CD14-positive monocyte (primary cell): ENCODE measurements at regions of chr15 and their contacts with region 1.

Region 1: DNA sequence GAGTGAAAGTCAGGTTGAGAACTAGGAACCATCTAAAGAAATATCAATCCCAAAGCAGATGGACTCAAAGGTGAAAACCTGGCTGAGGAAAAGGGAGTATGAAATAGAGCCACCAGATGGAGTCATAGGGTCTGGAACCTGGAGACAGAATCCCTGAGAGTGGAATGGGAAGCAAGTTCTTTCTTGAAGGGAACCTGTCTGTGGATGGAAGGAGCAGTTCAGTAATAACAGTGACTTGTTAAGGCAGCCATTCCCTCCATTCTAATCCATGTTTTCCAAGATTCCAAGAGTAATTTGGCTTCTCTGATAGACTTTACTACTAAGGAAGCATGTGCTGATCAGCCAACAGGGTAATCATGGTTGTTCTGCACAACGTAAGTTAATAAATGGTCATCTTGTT is 22.5 kb upstream of the AQP9 start:
- DNase-seq: peak in 2 of 3 donors; percentile 53 to 58
- H3K4me3 ChIP-seq: no peak overlapping the region
- H3K4me3 Mint-ChIP-seq: no peak overlapping the region
- H3K27ac ChIP-seq: no peak overlapping the region
- H3K27ac Mint-ChIP-seq: peak overlapping the region in 3 of 7 donors; percentile 40 to 75 (median 52)
- H3K4me1 ChIP-seq: no peaks in the 10 kb centered on the region
- H3K4me1 Mint-ChIP-seq: no peaks in the 10 kb centered on the region
- H3K27me3 ChIP-seq: no peaks in the 10 kb centered on the region
- H3K27me3 Mint-ChIP-seq: peaks cover 0 to 3% (median 3%) of the 10 kb centered on the region in 3 donors
- CTCF ChIP-seq: peak; percentile 44

Region 2: GRCh38 chr15:58136731-58137130 is 21.0 kb after region 1 on chr15:
- intact Hi-C with region 1: loop called in 1 of 2 experiments (anchors 2 kb)
- DNase-seq: no peak
- H3K4me3 ChIP-seq: no peak overlapping the region
- H3K4me3 Mint-ChIP-seq: no peak overlapping the region
- H3K27ac ChIP-seq: peak overlapping the region in 1 of 2 donors; percentile 94
- H3K27ac Mint-ChIP-seq: peak overlapping the region in 1 of 7 donors; percentile 99
- H3K4me1 ChIP-seq: peaks cover 47% of the 10 kb centered on the region in 2 donors
- H3K4me1 Mint-ChIP-seq: peaks cover 35% of the 10 kb centered on the region
- H3K27me3 ChIP-seq: peaks cover 0 to 2% of the 10 kb centered on the region in 2 donors
- H3K27me3 Mint-ChIP-seq: peaks cover 3 to 7% (median 5%) of the 10 kb centered on the region in 3 donors
- CTCF ChIP-seq: no peak

Region 3: DNA sequence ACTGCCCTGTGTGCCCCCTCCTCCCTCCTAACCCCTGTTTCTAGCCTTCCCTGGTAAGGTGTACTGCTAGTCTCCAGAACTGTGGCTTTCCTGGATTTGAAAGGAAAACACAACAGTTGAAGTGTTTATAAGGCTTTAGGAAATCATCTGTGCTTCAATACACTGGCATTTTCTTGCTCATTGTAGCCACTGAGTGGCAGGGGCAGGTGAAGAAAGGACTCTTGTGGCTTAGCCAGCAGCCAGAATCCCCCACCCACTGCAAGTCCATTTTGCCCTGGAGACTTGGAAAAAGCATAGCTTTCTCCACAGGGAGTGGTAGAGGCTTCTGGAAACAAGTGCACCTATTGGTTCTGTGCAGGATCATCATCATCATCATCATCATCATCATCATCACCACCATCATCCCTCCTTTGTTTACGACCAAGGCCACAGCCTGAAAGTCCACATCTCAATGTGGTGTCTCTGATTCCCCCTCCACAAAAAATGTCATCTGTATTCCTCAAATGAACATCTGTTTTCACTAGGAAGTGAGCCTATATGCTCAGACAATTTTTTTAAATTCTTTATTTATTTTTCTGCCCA is 55.9 kb after region 1 on chr15:
- intact Hi-C with region 1: no loop called
- DNase-seq: no peak
- H3K4me3 ChIP-seq: no peak overlapping the region
- H3K4me3 Mint-ChIP-seq: peak overlapping the region in 1 of 2 donors; percentile 7
- H3K27ac ChIP-seq: no peak overlapping the region
- H3K27ac Mint-ChIP-seq: no peak overlapping the region
- H3K4me1 ChIP-seq: peaks cover 6 to 8% of the 10 kb centered on the region in 2 donors
- H3K4me1 Mint-ChIP-seq: peaks cover 8% of the 10 kb centered on the region
- H3K27me3 ChIP-seq: peaks cover 0 to 2% of the 10 kb centered on the region in 2 donors
- H3K27me3 Mint-ChIP-seq: peaks cover 4 to 20% (median 8%) of the 10 kb centered on the region in 3 donors
- CTCF ChIP-seq: no peak

Region 4: DNA sequence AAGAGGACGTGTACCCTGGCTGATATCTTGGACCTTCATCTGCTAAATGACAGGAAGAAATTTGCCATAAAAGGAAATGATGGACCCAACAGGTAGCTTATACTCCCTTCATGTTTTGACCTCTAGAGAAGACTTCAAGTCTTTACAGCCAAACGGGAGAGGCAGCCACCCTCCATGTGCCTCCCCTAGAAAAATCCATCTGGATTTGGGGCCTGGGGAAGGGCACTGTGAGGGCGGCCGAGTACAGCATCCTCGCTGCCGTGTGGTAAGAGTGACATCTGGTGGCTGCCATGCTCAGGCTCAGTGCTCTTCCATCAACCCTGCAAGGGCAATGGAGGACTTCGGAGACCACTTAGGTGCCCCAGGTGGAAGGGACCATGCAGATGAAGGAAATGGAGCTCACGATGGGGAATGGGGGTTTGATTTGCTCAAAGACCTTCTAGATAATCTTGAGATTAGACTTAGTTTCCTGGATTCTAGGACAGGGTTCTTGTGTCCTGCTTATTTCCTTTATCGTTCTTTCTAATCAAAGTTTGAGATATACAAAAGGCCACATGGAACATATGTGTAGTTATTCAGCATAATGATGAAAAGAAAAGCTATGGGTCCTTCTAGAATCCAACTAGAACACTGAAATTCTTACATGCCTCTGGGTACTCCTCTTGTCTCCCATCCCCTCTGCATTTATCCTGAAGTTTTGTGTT is 66.9 kb after region 1 on chr15:
- intact Hi-C with region 1: loop called (anchors 2 to 5 kb)
- DNase-seq: peak; percentile 32 to 57 (median 37)
- H3K4me3 ChIP-seq: no peak overlapping the region
- H3K4me3 Mint-ChIP-seq: peak overlapping the region in 1 of 2 donors; percentile 15
- H3K27ac ChIP-seq: no peak overlapping the region
- H3K27ac Mint-ChIP-seq: no peak overlapping the region
- H3K4me1 ChIP-seq: peaks cover 0 to 2% of the 10 kb centered on the region in 2 donors
- H3K4me1 Mint-ChIP-seq: peaks cover 5% of the 10 kb centered on the region
- H3K27me3 ChIP-seq: peaks cover 0 to 3% of the 10 kb centered on the region in 2 donors
- H3K27me3 Mint-ChIP-seq: peaks cover 4 to 11% (median 10%) of the 10 kb centered on the region in 3 donors
- CTCF ChIP-seq: peak; percentile 93

Region 5: DNA sequence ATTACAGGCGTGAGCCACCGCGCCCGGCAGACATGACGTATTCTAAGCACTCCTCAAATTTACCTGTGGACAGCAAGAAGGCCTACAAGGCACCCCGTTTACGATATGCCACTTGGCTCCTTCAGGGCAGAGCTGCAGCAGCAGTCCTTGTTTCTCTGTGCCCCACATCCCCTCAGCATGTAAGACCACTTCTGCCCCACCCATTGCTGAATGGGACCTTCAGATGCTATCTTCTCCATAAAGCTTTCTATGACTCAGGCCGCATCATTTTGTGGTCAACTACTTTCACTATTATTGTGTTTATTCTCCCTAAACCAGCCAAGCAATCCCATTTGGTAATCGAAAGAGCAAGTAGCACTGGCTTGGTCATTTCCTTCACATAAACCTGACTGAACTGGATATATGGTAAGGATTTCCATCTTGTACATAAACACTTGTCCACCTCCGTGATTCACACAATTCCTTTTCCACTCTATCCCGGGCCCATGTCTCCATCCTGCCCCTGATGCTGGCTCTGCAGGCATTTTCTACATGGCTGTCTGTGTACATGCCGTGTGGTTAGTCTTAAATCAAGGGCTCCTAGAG is 341.8 kb after region 1 on chr15:
- intact Hi-C with region 1: no loop called
- DNase-seq: peak in 2 of 3 donors; percentile 14 to 67
- H3K4me3 ChIP-seq: no peak overlapping the region
- H3K4me3 Mint-ChIP-seq: no peak overlapping the region
- H3K27ac ChIP-seq: no peak overlapping the region
- H3K27ac Mint-ChIP-seq: peak overlapping the region in 2 of 7 donors; percentile 22 to 51
- H3K4me1 ChIP-seq: peaks cover 23 to 32% of the 10 kb centered on the region in 2 donors
- H3K4me1 Mint-ChIP-seq: peaks cover 36% of the 10 kb centered on the region
- H3K27me3 ChIP-seq: no peaks in the 10 kb centered on the region
- H3K27me3 Mint-ChIP-seq: peaks cover 0 to 2% (median 0%) of the 10 kb centered on the region in 3 donors
- CTCF ChIP-seq: no peak